ENCODE measurements at regions of chr2 and their contacts with region 1.

Region 1: GRCh38 chr2:43131024-43131889 is 95.1 kb downstream of the ZFP36L2 start:
- DNase-seq: peak; percentile 99
- H3K4me3 Mint-ChIP-seq: peak overlapping the region; percentile 19
- H3K27ac Mint-ChIP-seq: peak overlapping the region; percentile 89
- H3K4me1 Mint-ChIP-seq: peaks cover 42% of the 10 kb centered on the region
- H3K27me3 Mint-ChIP-seq: no peaks in the 10 kb centered on the region
- CTCF ChIP-seq: peak; percentile 63

Region 2: DNA sequence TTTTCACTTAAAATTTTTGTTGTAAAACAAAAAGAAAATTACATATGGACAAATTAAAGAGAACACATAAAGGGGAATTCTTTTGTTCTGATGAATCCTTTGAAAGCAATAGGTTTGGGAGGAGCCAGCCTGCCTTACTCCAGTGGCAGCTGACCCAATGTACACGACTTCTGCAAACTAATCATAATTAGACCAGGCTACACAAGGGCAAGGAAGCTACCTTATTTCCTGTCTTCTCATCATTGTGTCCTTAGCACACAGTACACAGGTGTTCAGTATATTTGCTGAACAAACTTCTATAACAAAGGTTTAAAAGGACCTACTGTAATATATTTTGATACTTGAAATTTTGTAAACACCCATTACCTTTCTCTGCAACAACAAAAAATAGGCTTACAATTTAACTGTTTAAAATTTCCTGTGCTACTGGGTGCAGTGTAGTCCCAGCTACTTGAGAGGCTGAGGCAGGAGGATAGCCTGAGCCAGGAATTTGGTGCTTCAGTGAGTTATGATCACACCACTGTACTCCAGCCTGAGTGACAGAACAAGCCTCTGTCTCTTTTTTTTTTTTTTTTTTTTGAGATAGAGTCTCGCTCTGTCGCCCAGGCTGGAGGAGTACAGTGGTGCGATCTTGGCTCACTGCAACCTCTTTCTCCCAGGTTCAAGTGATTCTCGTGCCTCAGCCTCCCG is 656.3 kb before region 1 on chr2:
- CTCF ChIA-PET with region 1: no interaction called
- POLR2A ChIA-PET with region 1: no interaction called
- intact Hi-C with region 1: no loop called
- DNase-seq: no peak
- H3K4me3 Mint-ChIP-seq: no peak overlapping the region
- H3K27ac Mint-ChIP-seq: no peak overlapping the region
- H3K4me1 Mint-ChIP-seq: no peaks in the 10 kb centered on the region
- H3K27me3 Mint-ChIP-seq: no peaks in the 10 kb centered on the region
- CTCF ChIP-seq: no peak

Region 3: DNA sequence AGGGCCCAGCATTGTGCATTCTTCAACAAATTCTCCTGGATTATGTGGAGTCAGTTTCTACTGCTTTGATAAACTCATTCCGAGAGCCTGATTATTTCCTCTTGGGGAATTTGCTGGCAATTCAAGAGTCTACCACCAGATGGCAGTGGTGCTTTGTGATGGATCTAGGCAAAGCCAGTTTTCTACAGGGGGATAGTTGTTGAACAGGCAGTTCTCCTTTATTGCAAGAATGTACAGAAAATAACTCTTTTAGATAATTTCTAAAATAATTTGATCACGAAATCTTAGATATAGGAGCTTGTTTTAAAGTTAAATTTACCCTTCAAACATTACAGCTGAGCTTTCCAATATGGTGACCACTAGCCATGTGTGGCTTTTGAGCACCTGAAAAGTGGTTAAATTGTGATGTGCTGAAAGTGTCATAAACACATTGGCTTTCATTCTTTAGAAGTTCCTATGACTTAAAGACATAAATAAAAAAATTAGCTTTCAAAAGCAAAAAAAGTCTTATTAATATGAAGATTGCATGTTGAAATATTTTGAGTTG is 272.2 kb before region 1 on chr2:
- CTCF ChIA-PET with region 1: interaction called, 5 read pairs
- POLR2A ChIA-PET with region 1: no interaction called
- intact Hi-C with region 1: loop called (anchors 1 kb)
- DNase-seq: peak; percentile 82
- H3K4me3 Mint-ChIP-seq: no peak overlapping the region
- H3K27ac Mint-ChIP-seq: no peak overlapping the region
- H3K4me1 Mint-ChIP-seq: peaks cover 12% of the 10 kb centered on the region
- H3K27me3 Mint-ChIP-seq: no peaks in the 10 kb centered on the region
- CTCF ChIP-seq: peak; percentile 91

Region 4: GRCh38 chr2:42886921-42887320 is 244.3 kb before region 1 on chr2:
- CTCF ChIA-PET with region 1: no interaction called
- POLR2A ChIA-PET with region 1: no interaction called
- intact Hi-C with region 1: no loop called
- DNase-seq: peak; percentile 31
- H3K4me3 Mint-ChIP-seq: no peak overlapping the region
- H3K27ac Mint-ChIP-seq: no peak overlapping the region
- H3K4me1 Mint-ChIP-seq: peaks cover 3% of the 10 kb centered on the region
- H3K27me3 Mint-ChIP-seq: no peaks in the 10 kb centered on the region
- CTCF ChIP-seq: no peak

Region 5: GRCh38 chr2:42987112-42987922 is 143.9 kb before region 1 on chr2:
- CTCF ChIA-PET with region 1: interaction called, 3 read pairs
- POLR2A ChIA-PET with region 1: interaction called, 12 read pairs
- intact Hi-C with region 1: no loop called
- DNase-seq: peak; percentile 88
- H3K4me3 Mint-ChIP-seq: no peak overlapping the region
- H3K27ac Mint-ChIP-seq: peak overlapping the region; percentile 90
- H3K4me1 Mint-ChIP-seq: peaks cover 19% of the 10 kb centered on the region
- H3K27me3 Mint-ChIP-seq: no peaks in the 10 kb centered on the region
- CTCF ChIP-seq: no peak

Region 6: GRCh38 chr2:43051316-43051715 is 79.9 kb before region 1 on chr2:
- CTCF ChIA-PET with region 1: interaction called, 3 read pairs
- POLR2A ChIA-PET with region 1: interaction called, 24 read pairs
- intact Hi-C with region 1: no loop called
- DNase-seq: peak; percentile 71
- H3K4me3 Mint-ChIP-seq: no peak overlapping the region
- H3K27ac Mint-ChIP-seq: peak overlapping the region; percentile 93
- H3K4me1 Mint-ChIP-seq: peaks cover 60% of the 10 kb centered on the region
- H3K27me3 Mint-ChIP-seq: no peaks in the 10 kb centered on the region
- CTCF ChIP-seq: no peak

Region 7: DNA sequence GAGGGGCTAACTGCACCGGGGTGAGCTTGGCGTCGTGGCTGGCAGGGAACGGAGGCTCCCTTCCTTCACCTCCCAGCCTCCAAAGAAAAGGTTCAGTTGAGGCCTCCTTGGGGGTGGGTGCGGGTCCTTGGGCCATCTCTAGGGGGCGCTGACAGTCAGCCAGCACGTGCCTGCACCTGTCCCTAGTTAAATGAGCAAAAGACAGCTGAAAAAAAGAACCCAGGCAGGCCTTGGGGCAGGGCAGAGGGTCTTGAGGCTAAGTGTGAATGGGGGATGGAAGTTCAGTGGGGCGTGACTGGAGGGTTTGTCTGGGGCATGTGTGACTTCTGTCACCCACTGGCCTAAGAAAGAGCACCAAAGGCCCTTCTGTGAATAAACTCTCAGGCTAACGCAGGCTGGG is 38.7 kb after region 1 on chr2:
- CTCF ChIA-PET with region 1: no interaction called
- POLR2A ChIA-PET with region 1: interaction called, 3 read pairs
- intact Hi-C with region 1: loop called (anchors 5 kb)
- DNase-seq: peak; percentile 65
- H3K4me3 Mint-ChIP-seq: no peak overlapping the region
- H3K27ac Mint-ChIP-seq: peak overlapping the region; percentile 85
- H3K4me1 Mint-ChIP-seq: peaks cover 25% of the 10 kb centered on the region
- H3K27me3 Mint-ChIP-seq: no peaks in the 10 kb centered on the region
- CTCF ChIP-seq: peak; percentile 44

Region 8: GRCh38 chr2:43191947-43192516 is 60.8 kb after region 1 on chr2:
- CTCF ChIA-PET with region 1: no interaction called
- POLR2A ChIA-PET with region 1: no interaction called
- intact Hi-C with region 1: no loop called
- DNase-seq: no peak
- H3K4me3 Mint-ChIP-seq: no peak overlapping the region
- H3K27ac Mint-ChIP-seq: peak overlapping the region; percentile 75
- H3K4me1 Mint-ChIP-seq: peaks cover 5% of the 10 kb centered on the region
- H3K27me3 Mint-ChIP-seq: no peaks in the 10 kb centered on the region
- CTCF ChIP-seq: peak; percentile 14

Region 9: DNA sequence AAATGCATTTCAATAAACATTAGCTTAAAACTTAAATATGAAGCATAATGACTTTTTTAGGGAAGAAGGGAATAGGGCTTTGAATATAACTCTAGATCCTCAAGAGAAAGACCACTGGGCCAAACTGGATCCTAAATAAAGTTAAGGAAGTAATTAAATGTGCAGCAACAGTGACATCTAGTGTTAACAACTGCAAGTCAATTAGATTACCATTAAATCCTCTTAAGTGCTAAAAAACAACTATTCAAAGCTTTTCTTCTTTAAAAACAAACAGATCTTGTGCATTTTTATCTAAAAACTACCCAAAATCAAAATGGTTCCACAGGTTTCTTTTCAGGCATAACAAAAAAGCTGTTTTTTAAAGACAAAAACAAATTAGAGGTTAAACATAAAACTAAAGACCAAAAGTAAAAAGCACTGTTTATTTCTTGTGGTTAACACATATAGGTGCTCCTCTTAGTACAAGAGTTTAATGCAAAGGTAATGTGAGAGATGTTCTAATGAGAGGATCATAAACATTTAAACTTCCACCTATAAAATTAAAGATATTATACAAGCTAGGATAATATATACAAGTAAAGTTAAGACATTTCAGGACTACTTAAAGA is 353.2 kb after region 1 on chr2:
- CTCF ChIA-PET with region 1: interaction called, 3 read pairs
- POLR2A ChIA-PET with region 1: interaction called, 14 read pairs
- intact Hi-C with region 1: loop called (anchors 1 kb)
- DNase-seq: peak; percentile 74
- H3K4me3 Mint-ChIP-seq: no peak overlapping the region
- H3K27ac Mint-ChIP-seq: peak overlapping the region; percentile 96
- H3K4me1 Mint-ChIP-seq: peaks cover 37% of the 10 kb centered on the region
- H3K27me3 Mint-ChIP-seq: no peaks in the 10 kb centered on the region
- CTCF ChIP-seq: peak; percentile 59